ENCODE measurements at regions of chr1 and their contacts with region 1.

Region 1: DNA sequence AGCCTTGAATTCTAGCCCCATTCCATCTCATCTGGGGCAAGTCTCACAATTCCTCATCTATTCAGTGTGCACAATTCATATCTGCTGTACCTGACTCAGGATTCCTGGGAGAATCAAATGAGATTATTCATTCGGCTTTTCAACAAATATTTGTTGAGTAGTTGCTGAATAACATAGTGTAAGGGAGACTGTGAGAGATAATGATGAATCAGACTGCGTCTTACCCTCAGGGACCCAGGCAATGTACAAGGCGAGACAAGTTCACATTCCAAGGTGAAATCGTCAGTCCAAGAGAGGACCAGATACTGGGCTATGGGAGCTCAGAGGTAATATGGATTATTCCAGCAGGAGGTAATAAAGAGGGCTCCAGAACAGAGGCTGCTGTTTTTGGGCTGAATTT is 67.8 kb upstream of the SMYD2 start:
- DNase-seq: no peak
- ATAC-seq: no peak
- H3K4me3 ChIP-seq: no peak overlapping the region
- H3K27ac ChIP-seq: no peak overlapping the region
- H3K4me1 ChIP-seq: peaks cover 6% of the 10 kb centered on the region
- H3K27me3 ChIP-seq: peaks cover 7% of the 10 kb centered on the region
- CTCF ChIP-seq: no peak

Region 2: GRCh38 chr1:214261206-214262123 is 48.3 kb after region 1 on chr1:
- CTCF ChIA-PET with region 1: interaction called, 20 read pairs
- POLR2A ChIA-PET with region 1: interaction called, 3 read pairs
- in situ Hi-C with region 1: no loop called
- intact Hi-C with region 1: no loop called
- DNase-seq: peak; percentile 67
- ATAC-seq: peak; percentile 98
- H3K4me3 ChIP-seq: no peak overlapping the region
- H3K27ac ChIP-seq: peak overlapping the region; percentile 44; the same call in 1 of the 2 replicates
- H3K4me1 ChIP-seq: 0 out of 2 replicates have a peak, but pooled peaks cover 2% of the 10 kb centered on the region
- H3K27me3 ChIP-seq: peaks cover 29% of the 10 kb centered on the region
- CTCF ChIP-seq: peak; percentile 99

Region 3: GRCh38 chr1:214310010-214310409 is 96.9 kb after region 1 on chr1:
- CTCF ChIA-PET with region 1: interaction called, 4 read pairs
- POLR2A ChIA-PET with region 1: no interaction called
- in situ Hi-C with region 1: no loop called
- intact Hi-C with region 1: loop called (anchors 5 kb)
- DNase-seq: no peak
- ATAC-seq: no peak
- H3K4me3 ChIP-seq: no peak overlapping the region
- H3K27ac ChIP-seq: no peak overlapping the region
- H3K4me1 ChIP-seq: no peaks in the 10 kb centered on the region
- H3K27me3 ChIP-seq: no peaks in the 10 kb centered on the region
- CTCF ChIP-seq: no peak

Region 4: DNA sequence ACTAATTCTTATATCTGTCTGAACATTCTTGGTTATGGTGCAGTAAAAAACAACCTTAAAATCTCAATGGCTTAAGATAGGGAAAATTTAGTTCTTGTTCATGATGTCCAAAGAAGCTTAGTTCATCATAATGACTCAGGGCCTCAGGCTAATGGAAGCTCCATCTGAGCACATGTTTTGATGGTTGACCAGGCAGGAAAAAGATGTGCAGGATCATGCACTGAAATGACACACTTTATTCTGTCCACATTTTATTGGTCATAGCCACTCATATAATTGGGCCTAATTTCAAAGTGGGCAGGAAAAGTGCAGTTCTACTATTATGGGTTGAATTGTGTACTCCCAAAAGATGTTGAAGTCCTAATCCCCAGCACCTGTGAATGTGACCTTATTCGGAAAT is 588.1 kb after region 1 on chr1:
- CTCF ChIA-PET with region 1: interaction called, 16 read pairs
- POLR2A ChIA-PET with region 1: no interaction called
- in situ Hi-C with region 1: no loop called
- intact Hi-C with region 1: no loop called
- DNase-seq: no peak
- ATAC-seq: no peak
- H3K4me3 ChIP-seq: no peak overlapping the region
- H3K27ac ChIP-seq: no peak overlapping the region
- H3K4me1 ChIP-seq: no peaks in the 10 kb centered on the region
- H3K27me3 ChIP-seq: no peaks in the 10 kb centered on the region
- CTCF ChIP-seq: no peak

Measured in Panc1 (cell line).